Sciatic nerve (tissue), 2 donors: ENCODE measurements at regions of chr1 and their contacts with region 1.

Region 1: DNA sequence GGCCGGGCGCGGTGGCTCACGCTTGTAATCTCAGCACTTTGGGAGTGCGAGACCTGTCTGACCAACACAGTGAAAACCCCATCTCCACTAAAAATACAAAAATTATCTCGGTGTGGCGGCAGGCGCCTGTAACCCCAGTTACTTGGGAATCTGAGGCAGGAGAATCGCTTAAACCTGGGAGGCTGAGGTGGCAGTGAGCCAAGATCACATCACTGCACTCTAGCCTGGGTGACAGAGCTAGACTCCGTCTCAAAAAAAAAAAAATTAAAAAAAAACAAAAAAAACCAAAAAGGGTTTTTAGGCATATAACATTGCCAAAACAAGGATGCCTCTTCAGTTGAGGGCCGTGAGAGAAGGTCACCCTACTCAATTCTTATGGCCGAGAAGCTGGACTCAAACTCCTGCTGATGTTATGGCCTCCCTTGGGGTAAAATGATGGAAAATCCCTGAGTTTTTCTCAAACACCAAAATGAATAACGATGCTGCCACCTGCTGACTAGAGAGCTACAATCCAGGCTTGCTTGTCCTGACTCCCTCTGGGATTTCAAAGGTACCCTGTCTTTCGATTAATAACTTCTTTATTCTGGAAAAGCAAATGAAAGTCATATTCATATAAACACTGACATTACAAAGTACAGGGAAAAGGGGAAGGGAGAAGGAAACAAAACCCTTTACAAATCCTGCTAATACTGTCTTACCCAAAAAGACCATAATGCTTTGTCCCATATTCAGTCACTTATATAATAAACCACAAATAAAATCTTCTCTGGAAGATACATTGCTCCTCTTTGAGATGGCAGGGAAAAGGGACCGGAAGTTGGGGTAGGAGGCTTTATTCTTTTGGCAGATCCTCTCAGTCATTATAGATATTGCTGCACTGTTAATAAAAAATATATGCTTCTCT is 10.7 kb downstream of the RAB42 start:
- DNase-seq: peak; percentile 78
- ATAC-seq: peak; percentile 84

Region 2: GRCh38 chr1:28417429-28417922 is 185.3 kb before region 1 on chr1:
- intact Hi-C with region 1: loop called (anchors 10 kb)
- DNase-seq: no peak
- ATAC-seq: no peak

Region 3: DNA sequence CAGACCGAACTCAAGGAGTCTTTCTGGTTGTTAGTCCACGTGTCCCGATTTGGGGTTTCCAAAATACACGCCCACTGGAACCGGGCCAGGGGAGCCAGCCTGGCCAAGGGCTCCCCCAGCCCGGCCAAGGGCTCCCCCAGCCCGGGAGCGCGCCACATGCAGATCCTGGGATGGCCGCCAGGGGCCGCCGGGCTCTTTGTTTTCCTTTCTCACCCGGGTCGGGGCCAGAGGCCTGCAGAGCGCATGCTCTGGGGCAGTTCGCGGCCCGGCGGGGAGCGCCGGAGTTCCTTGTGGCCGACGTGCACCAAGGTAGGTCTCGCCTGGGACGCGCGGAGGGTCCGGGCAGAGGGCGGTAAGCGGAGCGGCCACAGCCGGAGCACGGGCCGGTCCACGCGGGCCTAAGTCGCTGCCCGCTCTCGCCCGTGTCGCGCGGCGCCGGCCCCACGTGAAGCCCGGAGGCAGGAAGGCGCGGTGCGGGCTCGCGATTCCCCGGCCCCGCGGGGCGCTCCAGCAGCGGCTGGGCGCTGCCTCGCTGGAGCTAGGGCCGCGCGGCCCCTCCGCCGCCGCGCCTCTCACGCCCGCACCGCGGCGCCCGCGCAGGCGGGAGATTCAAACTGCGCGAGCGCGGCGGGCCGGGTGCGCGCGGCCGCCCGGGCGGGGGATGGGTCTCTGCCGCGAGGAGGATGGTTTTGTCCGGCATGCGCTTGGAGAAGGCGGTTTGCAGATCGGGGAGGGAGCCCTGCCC is 84.6 kb before region 1 on chr1:
- intact Hi-C with region 1: loop called (anchors 5 kb)
- DNase-seq: peak; percentile 94
- ATAC-seq: peak; percentile 94